Activated T-helper 1 cell treated with anti-CD3 and anti-CD28 coated beads, Interleukin-12 subunit alpha, Interleukin-12 subunit beta, Interleukin-2, Interleukin-4 antibody, amounts not matched to agents 30 ng/mL and 10 ng/mL and 1 ng/mL, durations not matched to agents 14 hours and 24 hours and 36 hours (primary cell): ENCODE measurements at regions of chr9 and their contacts with region 1.

Region 1: GRCh38 chr9:109903515-109904138 is 123.6 kb downstream of the PALM2AKAP2 start:
- DNase-seq: peak; percentile 50
- H3K4me3 Mint-ChIP-seq: no peak overlapping the region
- H3K27ac Mint-ChIP-seq: peak overlapping the region; percentile 0
- H3K4me1 Mint-ChIP-seq: peaks cover 56% of the 10 kb centered on the region
- H3K27me3 Mint-ChIP-seq: no peaks in the 10 kb centered on the region

Region 2: GRCh38 chr9:109574068-109574882 is 329.4 kb before region 1 on chr9:
- intact Hi-C with region 1: loop called (anchors 5 kb)
- DNase-seq: peak; percentile 14
- H3K4me3 Mint-ChIP-seq: no peak overlapping the region
- H3K27ac Mint-ChIP-seq: no peak overlapping the region
- H3K4me1 Mint-ChIP-seq: no peaks in the 10 kb centered on the region
- H3K27me3 Mint-ChIP-seq: peaks cover 19% of the 10 kb centered on the region

Region 3: GRCh38 chr9:109918339-109919163 is 14.9 kb after region 1 on chr9:
- intact Hi-C with region 1: loop called (anchors 1 kb)
- DNase-seq: peak; percentile 44
- H3K4me3 Mint-ChIP-seq: peak overlapping the region; percentile 75
- H3K27ac Mint-ChIP-seq: peak overlapping the region; percentile 97
- H3K4me1 Mint-ChIP-seq: peaks cover 64% of the 10 kb centered on the region
- H3K27me3 Mint-ChIP-seq: no peaks in the 10 kb centered on the region

Region 4: GRCh38 chr9:109950710-109951443 is 47.2 kb after region 1 on chr9:
- intact Hi-C with region 1: loop called (anchors 1 kb)
- DNase-seq: no peak
- H3K4me3 Mint-ChIP-seq: peak overlapping the region; percentile 31
- H3K27ac Mint-ChIP-seq: peak overlapping the region; percentile 91
- H3K4me1 Mint-ChIP-seq: peaks cover 42% of the 10 kb centered on the region
- H3K27me3 Mint-ChIP-seq: peaks cover 2% of the 10 kb centered on the region

Region 5: GRCh38 chr9:110048403-110048975 is 144.9 kb after region 1 on chr9:
- intact Hi-C with region 1: loop called (anchors 2 kb)
- DNase-seq: peak; percentile 81
- H3K4me3 Mint-ChIP-seq: peak overlapping the region; percentile 93
- H3K27ac Mint-ChIP-seq: peak overlapping the region; percentile 89
- H3K4me1 Mint-ChIP-seq: peaks cover 58% of the 10 kb centered on the region
- H3K27me3 Mint-ChIP-seq: no peaks in the 10 kb centered on the region

Region 6: DNA sequence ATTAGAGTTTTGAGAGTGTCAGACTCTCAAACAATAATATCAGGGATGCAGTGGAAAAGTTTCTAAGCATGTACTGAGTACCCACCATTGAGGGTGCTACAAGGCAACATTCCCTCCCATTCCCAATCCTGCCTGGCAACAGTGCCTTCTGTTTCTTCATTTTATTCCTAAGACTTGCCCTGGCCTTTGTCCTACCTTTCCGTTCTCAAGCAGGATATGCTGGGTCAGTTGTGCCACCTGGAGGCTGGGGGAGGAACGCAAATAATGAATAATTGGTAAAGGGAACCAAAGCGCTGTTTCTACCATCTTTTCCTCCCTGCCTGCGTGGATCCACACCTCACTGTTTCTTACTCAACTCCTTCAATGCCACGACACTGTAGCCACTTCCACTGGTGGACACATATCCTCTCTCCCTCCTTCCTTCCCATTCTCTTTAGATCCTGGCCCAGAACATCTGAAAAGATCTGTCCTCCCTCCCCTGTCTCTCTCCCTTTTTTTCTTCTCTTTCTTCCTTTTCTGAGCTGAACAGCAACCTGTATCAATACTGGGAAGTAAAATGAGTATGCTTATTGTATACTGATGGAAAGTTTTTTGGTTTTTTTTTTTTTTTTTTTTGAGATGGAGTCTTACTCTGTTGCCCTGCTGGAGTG is 154.8 kb after region 1 on chr9:
- intact Hi-C with region 1: loop called (anchors 1 kb)
- DNase-seq: peak; percentile 24
- H3K4me3 Mint-ChIP-seq: peak overlapping the region; percentile 11
- H3K27ac Mint-ChIP-seq: peak overlapping the region; percentile 83
- H3K4me1 Mint-ChIP-seq: peaks cover 57% of the 10 kb centered on the region
- H3K27me3 Mint-ChIP-seq: no peaks in the 10 kb centered on the region

Region 7: GRCh38 chr9:110217656-110218099 is 314.1 kb after region 1 on chr9:
- intact Hi-C with region 1: loop called (anchors 1 kb)
- DNase-seq: no peak
- H3K4me3 Mint-ChIP-seq: no peak overlapping the region
- H3K27ac Mint-ChIP-seq: no peak overlapping the region
- H3K4me1 Mint-ChIP-seq: peaks cover 6% of the 10 kb centered on the region
- H3K27me3 Mint-ChIP-seq: peaks cover 15% of the 10 kb centered on the region